Natural killer cell (primary cell): ENCODE measurements at regions of chr11 and their contacts with region 1.

Region 1: GRCh38 chr11:23569547-23569946 is 709.3 kb upstream of the CCDC179 start:
- DNase-seq: peak; percentile 38 to 49
- ATAC-seq: peak; percentile 88 to 98 (median 93)
- H3K4me3 ChIP-seq: no peak overlapping the region
- H3K4me3 Mint-ChIP-seq: peak overlapping the region; percentile 51
- H3K27ac ChIP-seq: peak overlapping the region; percentile 45
- H3K27ac Mint-ChIP-seq: peak overlapping the region; percentile 68 to 78
- H3K4me1 ChIP-seq: peaks cover 9% of the 10 kb centered on the region
- H3K4me1 Mint-ChIP-seq: peaks cover 50 to 64% of the 10 kb centered on the region in 2 donors
- H3K27me3 ChIP-seq: no peaks in the 10 kb centered on the region
- H3K27me3 Mint-ChIP-seq: peaks cover 0 to 5% of the 10 kb centered on the region in 2 donors
- CTCF ChIP-seq: no peak

Region 2: GRCh38 chr11:23181022-23181807 is 388.3 kb before region 1 on chr11:
- intact Hi-C with region 1: loop called (anchors 2 kb)
- DNase-seq: peak in 1 of 2 donors; percentile 9
- ATAC-seq: peak; percentile 90 to 97 (median 90)
- H3K4me3 ChIP-seq: no peak overlapping the region
- H3K4me3 Mint-ChIP-seq: peak overlapping the region; percentile 78
- H3K27ac ChIP-seq: peak overlapping the region; percentile 68
- H3K27ac Mint-ChIP-seq: peak overlapping the region; percentile 82 to 92
- H3K4me1 ChIP-seq: peaks cover 11% of the 10 kb centered on the region
- H3K4me1 Mint-ChIP-seq: peaks cover 38 to 44% of the 10 kb centered on the region in 2 donors
- H3K27me3 ChIP-seq: no peaks in the 10 kb centered on the region
- H3K27me3 Mint-ChIP-seq: peaks cover 0 to under 1% of the 10 kb centered on the region in 2 donors
- CTCF ChIP-seq: no peak

Region 3: DNA sequence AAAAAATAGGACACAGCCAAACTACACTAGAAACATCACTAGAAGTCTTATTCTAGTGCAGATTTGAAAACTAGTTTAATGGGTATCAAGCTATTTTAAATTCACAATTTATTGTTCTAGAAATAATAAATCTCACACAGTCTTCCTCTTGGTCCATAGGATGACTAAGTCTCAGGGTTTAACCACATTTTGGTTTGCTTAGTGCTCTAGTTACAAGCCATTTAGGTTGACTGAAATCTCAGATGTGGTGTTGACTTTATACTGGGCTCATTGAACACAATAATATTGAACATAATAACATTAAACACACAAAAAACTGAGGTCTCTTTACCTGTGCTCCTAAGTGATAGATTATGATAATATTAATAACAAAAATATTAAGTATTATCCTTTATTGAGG is 51.1 kb after region 1 on chr11:
- intact Hi-C with region 1: no loop called
- DNase-seq: no peak
- ATAC-seq: no peak
- H3K4me3 ChIP-seq: no peak overlapping the region
- H3K4me3 Mint-ChIP-seq: no peak overlapping the region
- H3K27ac ChIP-seq: no peak overlapping the region
- H3K27ac Mint-ChIP-seq: no peak overlapping the region
- H3K4me1 ChIP-seq: no peaks in the 10 kb centered on the region
- H3K4me1 Mint-ChIP-seq: no peaks in the 10 kb centered on the region
- H3K27me3 ChIP-seq: no peaks in the 10 kb centered on the region
- H3K27me3 Mint-ChIP-seq: peaks cover 0 to 2% of the 10 kb centered on the region in 2 donors
- CTCF ChIP-seq: no peak

Region 4: GRCh38 chr11:23632293-23632692 is 62.7 kb after region 1 on chr11:
- intact Hi-C with region 1: no loop called
- DNase-seq: no peak
- ATAC-seq: no peak
- H3K4me3 ChIP-seq: no peak overlapping the region
- H3K4me3 Mint-ChIP-seq: no peak overlapping the region
- H3K27ac ChIP-seq: no peak overlapping the region
- H3K27ac Mint-ChIP-seq: no peak overlapping the region
- H3K4me1 ChIP-seq: no peaks in the 10 kb centered on the region
- H3K4me1 Mint-ChIP-seq: peaks cover 9 to 10% of the 10 kb centered on the region in 2 donors
- H3K27me3 ChIP-seq: no peaks in the 10 kb centered on the region
- H3K27me3 Mint-ChIP-seq: peaks cover 0 to 3% of the 10 kb centered on the region in 2 donors
- CTCF ChIP-seq: no peak

Region 5: DNA sequence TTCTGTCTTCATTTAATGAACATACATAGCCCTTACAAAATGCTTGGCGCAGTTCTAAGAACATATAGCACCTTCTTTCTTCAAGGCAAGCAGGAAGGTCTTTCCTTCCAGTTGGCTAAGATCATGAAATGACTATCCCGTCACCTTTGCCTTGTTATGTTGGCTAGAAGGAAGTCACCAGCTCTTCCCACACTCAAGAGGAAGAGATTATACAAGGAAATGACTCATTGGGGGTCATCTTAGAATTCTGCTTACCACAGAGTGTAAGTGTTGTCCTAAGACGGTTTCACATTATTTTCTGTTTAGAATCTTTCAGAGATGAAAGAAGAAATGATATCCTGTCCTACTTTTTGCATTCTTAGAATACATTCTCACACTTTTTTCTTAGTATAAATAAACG is 119.3 kb after region 1 on chr11:
- intact Hi-C with region 1: loop called (anchors 5 kb)
- DNase-seq: peak in 1 of 2 donors; percentile 2
- ATAC-seq: peak; percentile 78 to 91 (median 86)
- H3K4me3 ChIP-seq: no peak overlapping the region
- H3K4me3 Mint-ChIP-seq: peak overlapping the region; percentile 89
- H3K27ac ChIP-seq: peak overlapping the region; percentile 54
- H3K27ac Mint-ChIP-seq: peak overlapping the region; percentile 70 to 75
- H3K4me1 ChIP-seq: peaks cover 7% of the 10 kb centered on the region
- H3K4me1 Mint-ChIP-seq: peaks cover 53 to 55% of the 10 kb centered on the region in 2 donors
- H3K27me3 ChIP-seq: no peaks in the 10 kb centered on the region
- H3K27me3 Mint-ChIP-seq: no peaks in the 10 kb centered on the region
- CTCF ChIP-seq: no peak